ENCODE measurements at regions of chr12 and their contacts with region 1.

Region 1: DNA sequence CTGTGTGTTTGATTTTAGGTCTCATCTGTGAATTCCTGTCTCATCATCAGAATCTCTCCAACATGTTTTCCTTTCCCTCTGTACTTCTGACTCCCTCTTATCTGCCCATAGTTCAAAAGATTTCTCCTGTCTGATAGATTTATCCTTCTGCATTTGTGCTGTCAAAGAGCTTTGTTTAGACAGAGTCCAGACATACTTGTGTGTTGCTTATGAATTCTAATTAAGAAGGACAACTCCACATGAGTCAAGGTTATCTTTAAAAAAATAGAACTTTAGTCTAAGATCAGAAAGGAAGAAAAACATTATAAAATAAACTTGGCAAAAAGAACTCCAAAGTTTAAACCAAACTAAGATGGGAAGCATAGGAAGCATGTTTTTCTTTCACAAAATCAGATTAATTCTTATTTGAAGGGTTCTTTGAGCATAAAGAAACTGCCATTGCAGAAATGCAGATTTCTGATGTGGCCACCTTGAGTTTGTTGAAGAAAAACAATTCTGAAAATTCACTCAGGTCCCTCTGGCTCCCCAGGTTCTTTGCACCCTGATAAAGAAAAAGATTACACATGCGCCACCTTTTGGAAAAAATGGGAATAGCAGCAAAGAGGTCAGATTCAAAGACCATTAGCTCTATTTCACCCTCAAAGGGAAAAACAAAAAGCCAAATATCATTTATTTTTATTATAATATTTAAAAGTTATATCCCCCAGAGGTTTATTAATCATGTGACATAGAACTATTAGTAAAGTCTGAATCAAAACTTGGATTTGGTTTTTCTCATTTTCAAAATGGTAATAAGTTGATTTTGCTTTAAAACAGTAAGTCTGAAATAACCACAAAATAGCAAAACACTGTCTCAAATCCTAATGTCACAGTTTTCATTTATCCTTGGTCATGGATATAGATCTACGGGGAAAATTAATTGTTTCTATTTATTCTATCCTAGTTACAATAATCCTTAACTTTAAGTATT is 143.7 kb upstream of the DCN start:
- DNase-seq: peak in 1 of 2 experiments; percentile 68
- H3K4me3 ChIP-seq: no peak overlapping the region
- H3K27ac ChIP-seq: no peak overlapping the region
- H3K4me1 ChIP-seq: no peaks in the 10 kb centered on the region
- H3K27me3 ChIP-seq: no peaks in the 10 kb centered on the region
- CTCF ChIP-seq: peak in 2 of 3 experiments; percentile 55 to 61; a peak in 3 of 4 replicates
- EP300 ChIP-seq: no peak
- POLR2A ChIP-seq: no peak
- RAD21 ChIP-seq: peak; percentile 76 to 79

Region 2: DNA sequence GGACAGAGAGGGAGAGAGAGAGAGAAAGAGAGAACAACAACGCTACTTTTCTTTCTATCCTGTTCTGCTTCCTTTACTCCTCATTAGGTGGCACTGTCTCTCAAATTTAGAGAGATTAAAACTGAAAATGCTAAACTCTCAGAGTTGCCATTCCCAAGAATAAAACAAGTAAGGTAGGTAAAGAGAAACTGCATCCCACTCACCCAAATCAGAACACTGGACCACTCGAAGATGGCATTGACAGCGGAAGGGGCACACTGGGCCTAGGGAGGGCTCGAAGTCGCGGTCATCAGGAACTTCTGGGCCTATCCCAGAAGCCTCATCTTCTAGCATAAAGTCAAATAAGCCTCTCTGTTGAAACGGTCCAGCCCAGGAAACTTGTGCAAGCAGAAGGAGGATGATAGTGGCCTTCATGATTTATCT is 148.2 kb before region 1 on chr12:
- CTCF ChIA-PET with region 1: interaction called, 18 read pairs
- POLR2A ChIA-PET with region 1: no interaction called
- DNase-seq: no peak
- H3K4me3 ChIP-seq: no peak overlapping the region
- H3K27ac ChIP-seq: no peak overlapping the region
- H3K4me1 ChIP-seq: no peaks in the 10 kb centered on the region
- H3K27me3 ChIP-seq: no peaks in the 10 kb centered on the region
- CTCF ChIP-seq: peak in 2 of 3 experiments; percentile 27 to 44; a peak in 2 of 4 replicates
- EP300 ChIP-seq: no peak
- POLR2A ChIP-seq: no peak
- RAD21 ChIP-seq: peak; percentile 62 to 66

Region 3: DNA sequence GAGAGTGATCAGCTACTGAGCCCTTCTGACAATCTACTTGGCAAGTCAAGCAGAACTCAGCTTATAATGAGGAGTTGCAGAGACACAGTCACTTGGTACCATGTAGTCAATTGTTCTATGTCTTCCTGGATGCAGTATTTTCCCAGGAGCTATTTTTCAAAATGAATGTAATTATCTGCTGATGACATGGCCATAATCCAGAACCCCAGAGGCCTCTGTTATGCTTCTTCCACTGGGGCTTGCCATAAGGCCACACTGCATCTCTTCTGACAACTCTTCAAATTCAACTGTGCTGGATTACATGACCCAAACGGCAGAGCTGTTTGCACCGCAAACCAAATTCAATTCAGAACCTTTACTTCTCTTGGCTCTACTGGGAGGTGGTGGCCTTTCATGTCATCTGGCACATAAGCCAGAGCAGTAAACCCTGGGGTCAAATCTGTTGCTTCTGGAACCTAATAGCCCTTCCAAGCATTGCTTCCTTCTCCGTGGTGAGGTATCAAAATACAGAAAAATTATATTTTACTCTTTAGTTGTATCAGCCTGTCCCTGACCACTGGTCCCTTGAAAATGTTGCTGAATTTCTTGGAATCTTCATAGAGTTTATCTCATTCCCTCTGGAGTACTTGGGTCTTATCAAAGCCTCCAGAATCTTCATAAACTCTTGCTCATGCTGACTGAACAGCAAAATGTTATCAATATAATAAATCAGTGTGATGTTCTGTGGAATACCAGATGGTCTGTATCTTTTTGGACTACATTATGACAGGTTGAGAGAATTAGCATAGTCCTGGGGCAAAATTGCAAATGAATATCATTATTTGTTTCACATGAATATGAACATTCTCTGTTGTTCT is 64.3 kb before region 1 on chr12:
- CTCF ChIA-PET with region 1: no interaction called
- POLR2A ChIA-PET with region 1: no interaction called
- DNase-seq: no peak
- H3K4me3 ChIP-seq: no peak overlapping the region
- H3K27ac ChIP-seq: no peak overlapping the region
- H3K4me1 ChIP-seq: no peaks in the 10 kb centered on the region
- H3K27me3 ChIP-seq: no peaks in the 10 kb centered on the region
- CTCF ChIP-seq: no peak
- EP300 ChIP-seq: no peak
- POLR2A ChIP-seq: no peak
- RAD21 ChIP-seq: no peak

Measured in H1 (cell line).